Adrenal gland (tissue), 19 donors: ENCODE measurements at regions of chr17 and their contacts with region 1.

Region 1: DNA sequence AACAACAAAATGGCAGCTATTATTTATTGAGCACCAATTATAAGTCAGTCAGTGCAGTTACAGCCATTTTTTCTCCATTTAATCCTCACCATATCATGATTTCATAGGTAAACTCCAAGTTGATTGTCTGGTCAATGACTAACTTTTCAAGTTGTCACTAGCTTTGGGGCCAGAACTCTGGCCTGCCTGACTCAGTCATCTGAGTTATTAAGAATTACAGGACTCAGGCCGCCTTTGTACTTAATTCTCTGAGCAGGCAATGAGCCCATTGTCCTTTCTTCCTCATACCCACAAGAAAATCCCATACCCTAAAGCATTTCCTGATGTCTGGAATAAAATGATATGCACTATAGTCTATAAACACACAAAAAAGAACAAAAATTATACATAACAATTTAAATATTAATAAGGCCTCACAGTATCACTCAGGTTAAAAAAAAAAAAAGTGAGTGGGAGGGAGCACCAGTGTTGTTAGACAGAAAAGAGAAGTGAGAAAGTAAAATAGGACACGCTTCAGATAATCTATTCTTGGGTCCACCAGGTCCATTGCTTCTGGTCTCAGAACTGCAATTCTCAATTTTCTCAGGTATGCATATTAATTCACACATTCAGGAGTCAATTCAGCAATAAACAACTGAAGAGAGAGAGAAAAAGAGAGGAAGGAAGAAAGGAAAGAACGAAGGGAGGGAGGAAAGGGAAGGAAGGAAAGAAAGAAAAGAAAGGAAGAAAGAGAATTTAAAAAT is 70.2 kb downstream of the SPAG9 start:
- DNase-seq: no peak
- H3K4me3 ChIP-seq: no peak overlapping the region
- H3K27ac ChIP-seq: no peak overlapping the region
- H3K4me1 ChIP-seq: peaks cover 15 to 41% of the 10 kb centered on the region in 2 donors
- H3K27me3 ChIP-seq: no peaks in the 10 kb centered on the region
- CTCF ChIP-seq: no peak
- POLR2A ChIP-seq: no peak

Region 2: DNA sequence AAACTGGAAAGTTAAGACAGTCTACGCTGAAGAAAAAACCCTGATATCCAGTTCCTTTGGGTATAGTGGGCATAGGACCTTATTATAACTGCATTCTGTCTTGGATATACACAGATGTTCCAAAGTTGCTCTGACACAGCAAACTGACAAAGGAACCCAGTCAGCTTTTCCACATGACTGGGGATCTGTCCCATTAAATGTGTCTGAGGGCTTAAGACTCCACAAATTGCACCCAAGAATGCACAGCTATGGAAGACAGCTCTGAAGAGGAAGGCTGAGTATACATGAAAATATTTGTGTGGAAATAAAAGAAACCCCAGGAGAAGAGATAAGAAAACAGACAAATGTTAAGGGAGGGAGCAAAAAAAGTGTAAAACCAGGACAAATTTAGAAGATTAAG is 43.9 kb before region 1 on chr17:
- intact Hi-C with region 1: loop called in 1 of 2 experiments (anchors 5 kb)
- DNase-seq: no peak
- H3K4me3 ChIP-seq: no peak overlapping the region
- H3K27ac ChIP-seq: no peak overlapping the region
- H3K4me1 ChIP-seq: no peaks in the 10 kb centered on the region
- H3K27me3 ChIP-seq: no peaks in the 10 kb centered on the region
- CTCF ChIP-seq: no peak
- POLR2A ChIP-seq: no peak